Naive thymus-derived CD4-positive, alpha-beta T cell (primary cell): ENCODE measurements at regions of chr6 and their contacts with region 1.

Region 1: GRCh38 chr6:120279466-120280167 is 930.1 kb upstream of the MAN1A1 start:
- DNase-seq: no peak
- ATAC-seq: no peak
- H3K4me3 ChIP-seq: no peak overlapping the region
- H3K4me3 Mint-ChIP-seq: no peak overlapping the region
- H3K27ac ChIP-seq: no peak overlapping the region
- H3K27ac Mint-ChIP-seq: no peak overlapping the region
- H3K4me1 ChIP-seq: no peaks in the 10 kb centered on the region
- H3K4me1 Mint-ChIP-seq: no peaks in the 10 kb centered on the region
- H3K27me3 ChIP-seq: no peaks in the 10 kb centered on the region
- H3K27me3 Mint-ChIP-seq: no peaks in the 10 kb centered on the region

Region 2: DNA sequence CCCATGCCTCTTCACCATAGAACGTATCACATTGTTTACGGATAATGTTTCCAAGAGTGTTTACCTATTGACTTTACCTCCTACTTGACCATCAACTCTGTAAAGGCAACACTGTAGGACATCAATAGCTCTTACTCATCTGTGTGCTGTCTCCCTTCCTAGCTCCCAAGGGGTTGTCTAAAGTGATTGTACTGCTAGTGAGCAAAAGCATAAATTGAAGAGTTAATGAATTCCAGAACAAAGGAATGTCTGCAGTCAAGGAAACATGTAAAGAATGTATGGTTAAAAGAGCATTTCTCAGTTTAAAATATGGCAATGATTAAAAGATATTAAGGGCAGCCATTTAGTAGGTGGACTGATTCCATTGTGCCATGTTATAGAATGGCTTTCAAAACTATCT is 69.3 kb after region 1 on chr6:
- CTCF ChIA-PET with region 1: no interaction called
- POLR2A ChIA-PET with region 1: no interaction called
- intact Hi-C with region 1: loop called in 1 of 2 experiments (anchors 2 kb)
- DNase-seq: no peak
- ATAC-seq: no peak
- H3K4me3 ChIP-seq: no peak overlapping the region
- H3K4me3 Mint-ChIP-seq: no peak overlapping the region
- H3K27ac ChIP-seq: no peak overlapping the region
- H3K27ac Mint-ChIP-seq: no peak overlapping the region
- H3K4me1 ChIP-seq: no peaks in the 10 kb centered on the region
- H3K4me1 Mint-ChIP-seq: no peaks in the 10 kb centered on the region
- H3K27me3 ChIP-seq: no peaks in the 10 kb centered on the region
- H3K27me3 Mint-ChIP-seq: no peaks in the 10 kb centered on the region